WTC11 (cell line): ENCODE measurements at regions of chr6 and their contacts with region 1.

Region 1: GRCh38 chr6:108966855-108967755 is 118.9 kb downstream of the ARMC2 start:
- DNase-seq: peak; percentile 47
- ATAC-seq: peak; percentile 70
- H3K4me3 Mint-ChIP-seq: no peak overlapping the region
- H3K27ac Mint-ChIP-seq: peak overlapping the region; percentile 83
- H3K4me1 Mint-ChIP-seq: peaks cover 35% of the 10 kb centered on the region
- H3K27me3 Mint-ChIP-seq: no peaks in the 10 kb centered on the region; the same call in 1 of the 2 replicates
- CTCF ChIP-seq: no peak

Region 2: GRCh38 chr6:108848116-108848868 is 118.8 kb before region 1 on chr6 and contains the start of gene ARMC2:
- CTCF ChIA-PET with region 1: interaction called, 12 read pairs
- POLR2A ChIA-PET with region 1: no interaction called
- DNase-seq: peak; percentile 96
- ATAC-seq: peak; percentile 97
- H3K4me3 Mint-ChIP-seq: peak within 1 kb of the TSS; percentile 76
- H3K27ac Mint-ChIP-seq: peak within 1 kb of the TSS; percentile 32; the same call in 1 of the 2 replicates
- H3K4me1 Mint-ChIP-seq: peaks cover 13% of the 10 kb centered on the region
- H3K27me3 Mint-ChIP-seq: no peaks in the 10 kb centered on the region
- CTCF ChIP-seq: no peak
- total RNA-seq, gene ARMC2: 4.6 to 5.2 TPM (median 4.7 TPM) in 3 replicates

Region 3: GRCh38 chr6:108920751-108921150 is 46.4 kb before region 1 on chr6:
- CTCF ChIA-PET with region 1: interaction called, 13 read pairs
- POLR2A ChIA-PET with region 1: no interaction called
- DNase-seq: peak; percentile 59
- ATAC-seq: peak; percentile 98
- H3K4me3 Mint-ChIP-seq: peak overlapping the region; percentile 20; the same call in 1 of the 2 replicates
- H3K27ac Mint-ChIP-seq: peak overlapping the region; percentile 90
- H3K4me1 Mint-ChIP-seq: peaks cover 63% of the 10 kb centered on the region
- H3K27me3 Mint-ChIP-seq: peaks cover 3% of the 10 kb centered on the region; the same call in 1 of the 2 replicates
- CTCF ChIP-seq: no peak

Region 4: DNA sequence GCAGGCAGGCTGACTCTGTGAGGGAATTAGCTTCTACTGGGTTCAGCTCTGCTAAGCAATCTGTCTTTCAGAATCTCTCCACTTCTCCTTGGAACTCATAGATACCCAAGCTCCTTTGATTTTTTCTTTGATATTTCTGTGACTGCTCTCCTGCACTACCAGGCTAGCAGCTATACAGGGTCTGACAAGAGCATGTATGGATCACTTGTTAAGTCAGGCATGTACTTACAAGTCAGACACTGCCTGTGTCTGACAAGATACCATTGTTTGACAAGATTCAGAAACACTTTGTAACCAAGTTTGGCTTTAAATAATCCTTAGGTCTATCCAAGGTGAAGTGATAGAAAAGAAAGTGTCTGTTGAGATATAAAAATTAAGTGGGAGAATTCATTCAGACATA is 48.1 kb after region 1 on chr6:
- CTCF ChIA-PET with region 1: no interaction called
- POLR2A ChIA-PET with region 1: no interaction called
- DNase-seq: no peak
- ATAC-seq: no peak
- H3K4me3 Mint-ChIP-seq: no peak overlapping the region
- H3K27ac Mint-ChIP-seq: no peak overlapping the region
- H3K4me1 Mint-ChIP-seq: peaks cover 12% of the 10 kb centered on the region
- H3K27me3 Mint-ChIP-seq: no peaks in the 10 kb centered on the region
- CTCF ChIP-seq: no peak

Region 5: GRCh38 chr6:110560239-110561007 is 1593.3 kb after region 1 on chr6:
- CTCF ChIA-PET with region 1: no interaction called
- POLR2A ChIA-PET with region 1: no interaction called
- DNase-seq: no peak
- ATAC-seq: no peak
- H3K4me3 Mint-ChIP-seq: no peak overlapping the region
- H3K27ac Mint-ChIP-seq: no peak overlapping the region
- H3K4me1 Mint-ChIP-seq: peaks cover 14% of the 10 kb centered on the region
- H3K27me3 Mint-ChIP-seq: peaks cover 22% of the 10 kb centered on the region
- CTCF ChIP-seq: no peak